ENCODE measurements at regions of chr21 and their contacts with region 1.

Region 1: DNA sequence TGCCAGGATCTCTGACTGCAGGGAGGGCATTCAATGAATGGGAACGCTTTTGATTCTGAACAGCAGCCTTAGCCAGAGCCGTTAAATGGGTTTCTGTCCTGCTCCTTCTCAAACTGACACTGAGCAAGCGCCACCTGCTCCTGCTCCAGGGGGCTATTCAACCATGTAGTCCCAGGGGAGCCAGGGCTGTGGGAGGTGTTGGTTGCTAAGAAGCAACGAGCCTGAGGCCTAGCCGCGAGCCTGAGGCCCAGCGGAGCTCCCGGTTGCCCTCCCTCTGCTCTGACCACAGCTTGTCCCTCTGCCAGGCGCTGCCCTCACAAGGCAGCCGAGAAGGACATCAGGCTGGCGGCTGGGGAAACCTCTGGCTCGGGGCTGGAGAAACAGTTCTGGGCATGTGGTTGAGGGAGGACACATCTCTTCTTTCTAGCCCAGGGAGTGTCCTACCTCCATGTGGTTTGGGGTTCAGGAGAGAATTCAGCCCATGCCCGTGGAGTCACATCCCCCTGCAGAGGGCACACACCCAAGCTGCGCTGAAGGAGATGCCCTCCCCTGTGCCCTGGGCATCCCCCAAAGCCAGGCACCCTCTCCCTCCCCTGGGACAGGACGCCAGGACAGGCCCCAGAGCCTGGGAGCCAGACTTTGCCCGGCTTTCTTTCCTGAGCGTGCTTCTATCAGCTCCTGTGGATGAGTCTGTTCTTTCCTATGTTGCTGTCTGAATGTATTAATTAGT is 18.0 kb downstream of the PCP4 start:
- DNase-seq: no peak
- ATAC-seq: no peak
- H3K4me3 ChIP-seq: no peak overlapping the region
- H3K27ac ChIP-seq: no peak overlapping the region
- H3K4me1 ChIP-seq: no peaks in the 10 kb centered on the region
- H3K27me3 ChIP-seq: peaks cover 2% of the 10 kb centered on the region; the same call in 1 of the 2 replicates
- CTCF ChIP-seq: no peak

Region 2: GRCh38 chr21:39818557-39819325 is 66.5 kb before region 1 on chr21:
- CTCF ChIA-PET with region 1: no interaction called
- POLR2A ChIA-PET with region 1: no interaction called
- in situ Hi-C with region 1: no loop called
- intact Hi-C with region 1: no loop called
- DNase-seq: no peak
- ATAC-seq: no peak
- H3K4me3 ChIP-seq: no peak overlapping the region
- H3K27ac ChIP-seq: no peak overlapping the region
- H3K4me1 ChIP-seq: no peaks in the 10 kb centered on the region
- H3K27me3 ChIP-seq: no peaks in the 10 kb centered on the region; the same call in 1 of the 2 replicates
- CTCF ChIP-seq: no peak

Region 3: DNA sequence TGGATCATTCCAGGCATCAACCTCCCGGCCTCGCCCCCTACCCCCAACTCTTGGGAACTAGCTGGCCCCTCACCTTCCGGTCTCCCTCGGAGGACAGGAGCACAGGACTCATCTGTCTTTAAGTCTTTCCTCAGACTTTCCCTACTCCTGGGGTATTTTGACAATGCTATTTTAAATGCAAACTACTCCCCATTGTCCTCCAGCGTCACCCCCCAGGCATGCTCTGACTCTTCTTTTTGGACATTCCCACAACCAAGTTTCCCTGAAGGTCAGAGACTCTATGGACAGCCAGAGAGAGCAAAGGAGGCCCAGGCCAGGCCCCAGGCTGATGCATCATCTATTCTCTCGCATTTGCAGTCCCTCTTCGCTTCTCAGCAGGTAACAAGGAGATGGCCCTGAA is 406.3 kb after region 1 on chr21:
- CTCF ChIA-PET with region 1: interaction called, 10 read pairs
- POLR2A ChIA-PET with region 1: no interaction called
- in situ Hi-C with region 1: no loop called
- intact Hi-C with region 1: no loop called
- DNase-seq: no peak
- ATAC-seq: no peak
- H3K4me3 ChIP-seq: no peak overlapping the region
- H3K27ac ChIP-seq: no peak overlapping the region
- H3K4me1 ChIP-seq: no peaks in the 10 kb centered on the region
- H3K27me3 ChIP-seq: no peaks in the 10 kb centered on the region
- CTCF ChIP-seq: no peak